H1 (cell line): ENCODE measurements at regions of chr2 and their contacts with region 1.

Region 1: DNA sequence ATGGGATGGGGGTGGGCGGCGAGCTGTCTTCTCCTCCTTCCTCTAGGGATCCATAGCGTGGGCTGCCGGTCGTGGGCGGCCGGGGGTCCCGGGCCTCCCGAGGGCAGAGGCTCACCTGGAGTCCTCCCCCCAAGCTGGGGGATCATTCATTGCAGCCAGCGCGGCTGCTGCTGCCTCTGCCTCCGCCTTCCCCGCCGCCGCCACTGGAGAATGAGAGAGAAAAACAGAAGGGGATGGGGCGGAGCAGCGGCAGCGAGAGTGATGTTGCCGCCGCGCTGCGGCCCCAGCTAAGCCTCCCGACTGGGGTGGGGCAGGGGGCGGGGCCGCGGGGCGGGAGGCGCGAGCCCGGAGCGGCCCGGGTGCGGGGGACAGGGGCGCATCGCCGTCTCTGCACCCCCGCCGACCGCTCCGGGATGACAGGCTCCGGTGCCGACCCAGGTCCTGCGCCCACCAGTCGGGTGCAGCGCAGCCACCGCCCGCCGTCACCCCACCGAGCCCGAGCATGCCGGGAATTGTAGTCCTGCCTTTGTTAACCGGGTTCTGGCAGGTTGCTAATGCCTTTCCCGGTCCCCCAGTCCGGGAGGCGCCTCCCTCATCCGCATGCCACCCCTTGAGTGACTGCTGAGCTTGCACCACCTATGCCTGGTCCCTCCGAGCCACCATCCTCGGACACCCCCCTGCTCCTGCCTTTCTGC is at the start of gene KIF3C:
- DNase-seq: peak; percentile 89 to 91
- H3K4me3 ChIP-seq: peak within 1 kb of the TSS; percentile 62 to 81 (median 75)
- H3K27ac ChIP-seq: peak within 1 kb of the TSS; percentile 53
- H3K4me1 ChIP-seq: peaks cover 3 to 32% (median 12%) of the 10 kb centered on the region in 4 experiments
- H3K27me3 ChIP-seq: no peaks in the 10 kb centered on the region
- CTCF ChIP-seq: no peak
- EP300 ChIP-seq: no peak
- POLR2A ChIP-seq: peak; percentile 31 to 57; a peak in 2 of 3 replicates
- RAD21 ChIP-seq: no peak
- total RNA-seq, gene KIF3C: 58.1 and 58.8 TPM in 2 replicates

Region 2: GRCh38 chr2:25951071-25951547 is 31.3 kb before region 1 on chr2:
- CTCF ChIA-PET with region 1: interaction called, 13 read pairs
- POLR2A ChIA-PET with region 1: interaction called, 6 read pairs
- DNase-seq: peak; percentile 56 to 79
- H3K4me3 ChIP-seq: no peak overlapping the region
- H3K27ac ChIP-seq: no peak overlapping the region
- H3K4me1 ChIP-seq: 0 out of 7 replicates have a peak, but pooled peaks cover 0 to 3% (median under 1%) of the 10 kb centered on the region in 4 experiments
- H3K27me3 ChIP-seq: no peaks in the 10 kb centered on the region
- CTCF ChIP-seq: peak; percentile 89 to 96 (median 94)
- EP300 ChIP-seq: no peak
- POLR2A ChIP-seq: no peak
- RAD21 ChIP-seq: peak; percentile 97 to 98